Right ventricle myocardium inferior (tissue), 1 donor: ENCODE measurements at regions of chr3 and their contacts with region 1.

Region 1: DNA sequence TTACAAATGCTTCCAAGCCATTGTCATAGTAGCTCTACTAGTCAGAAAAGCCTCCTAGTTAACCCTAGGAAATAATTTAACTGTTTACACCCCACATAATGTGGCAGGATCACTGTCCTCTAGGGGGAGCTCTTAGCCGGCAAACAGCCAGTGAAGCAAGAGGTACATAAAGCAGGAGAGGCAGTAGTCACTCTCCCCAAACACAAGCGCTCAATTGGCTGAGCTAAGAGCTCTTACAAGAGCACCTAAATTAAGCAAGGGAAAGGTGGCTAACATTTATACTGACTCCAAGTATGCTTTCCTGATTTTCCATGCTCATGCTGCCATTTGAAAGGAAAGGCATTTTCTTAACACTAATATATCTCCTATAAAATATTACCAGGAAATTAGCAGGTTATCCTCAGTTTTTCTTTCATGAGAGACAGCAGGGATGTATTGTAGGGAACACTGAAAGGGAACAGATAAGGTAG is 37.6 kb downstream of the NCEH1 start:
- DNase-seq: peak; percentile 75
- ATAC-seq: peak; percentile 78

Region 2: GRCh38 chr3:172710664-172711453 is 37.6 kb after region 1 on chr3 and contains the start of gene NCEH1:
- intact Hi-C with region 1: loop called (anchors 1 kb)
- DNase-seq: peak; percentile 94
- ATAC-seq: peak; percentile 99
- total RNA-seq, gene NCEH1: 60.4 TPM

Region 3: DNA sequence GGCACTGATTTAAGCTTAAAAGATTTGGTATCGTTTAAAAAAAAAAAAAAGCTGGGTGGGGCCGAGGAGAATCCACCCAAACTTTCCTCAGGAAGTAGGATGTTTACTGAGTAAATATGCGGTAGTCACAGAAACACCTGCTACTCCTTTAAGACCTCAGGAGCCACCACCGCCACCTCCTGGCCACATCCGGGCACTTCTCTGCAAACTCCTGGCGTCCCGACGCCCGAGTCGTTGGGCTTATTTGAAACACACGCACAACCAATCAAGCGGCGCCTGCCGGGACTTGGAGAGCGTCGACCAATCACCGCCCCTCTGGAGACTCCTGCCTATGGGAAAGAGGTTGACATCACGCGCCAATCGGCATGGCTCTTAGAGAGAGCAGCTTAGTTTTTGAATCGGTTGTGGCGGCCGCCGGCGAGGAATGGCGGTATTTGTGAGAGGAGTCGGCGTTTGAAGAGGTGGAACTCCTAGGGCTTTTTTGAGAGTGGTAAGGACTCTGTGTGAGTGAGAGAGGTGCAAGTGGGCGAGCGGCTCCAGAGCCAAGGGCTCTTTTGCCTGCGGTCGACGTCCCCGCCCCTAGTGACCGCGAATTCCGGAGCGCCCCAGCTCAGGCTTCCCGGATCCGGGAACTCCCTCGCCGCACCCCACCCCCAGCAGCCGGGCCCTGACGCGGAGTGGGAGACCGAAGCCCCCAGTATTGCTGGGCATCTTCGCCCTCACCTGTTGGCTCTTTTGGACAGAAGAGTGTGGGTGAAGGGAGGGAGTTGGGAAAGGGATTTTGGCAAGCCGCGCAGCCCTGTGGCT is 77.3 kb after region 1 on chr3 and contains the start of gene ECT2:
- intact Hi-C with region 1: loop called (anchors 1 kb)
- DNase-seq: peak; percentile 100
- ATAC-seq: peak; percentile 99
- total RNA-seq, gene ECT2: 6.3 TPM